Mammary epithelial cell (primary cell): ENCODE measurements at regions of chr2 and their contacts with region 1.

Region 1: DNA sequence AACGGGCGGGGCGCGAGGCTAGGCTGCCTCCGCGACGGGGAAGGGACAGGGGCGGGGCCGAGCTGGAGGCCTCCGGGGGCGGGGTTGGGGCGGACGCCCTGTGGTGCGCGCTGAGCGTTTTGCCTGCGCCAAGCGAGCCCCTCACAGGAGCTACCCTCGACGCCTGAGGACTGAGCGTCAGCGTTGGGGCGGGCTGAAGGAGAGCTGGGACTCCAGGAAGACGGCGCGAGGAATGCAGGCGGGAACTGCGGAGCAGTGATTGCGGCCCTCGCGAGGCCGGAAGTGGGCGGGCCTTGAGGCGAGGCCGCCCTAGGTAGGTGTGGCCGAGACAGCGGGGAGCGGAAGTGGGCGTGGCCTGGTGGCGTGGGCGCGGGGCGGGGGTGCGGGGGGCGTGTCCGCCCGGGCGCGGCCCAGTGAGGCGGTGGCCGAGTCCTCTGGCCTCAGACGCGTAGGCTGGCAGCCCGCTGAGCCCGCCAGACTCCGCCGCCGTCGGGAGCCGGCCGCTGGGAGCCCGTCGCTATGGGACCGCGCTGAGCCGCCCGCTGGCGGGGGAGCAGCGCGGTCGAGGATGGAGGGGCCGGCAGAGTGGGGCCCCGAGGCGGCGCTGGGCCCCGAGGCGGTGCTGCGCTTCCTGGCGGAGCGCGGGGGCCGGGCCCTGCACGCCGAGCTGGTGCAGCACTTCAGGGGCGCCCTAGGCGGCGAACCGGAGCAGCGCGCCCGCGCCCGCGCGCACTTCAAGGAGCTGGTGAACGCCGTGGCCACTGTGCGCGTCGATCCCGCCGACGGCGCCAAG is at the starts of genes SEPTIN10 and SOWAHC:
- DNase-seq: peak; percentile 99
- H3K4me3 ChIP-seq: peak within 1 kb of the TSS; percentile 75 to 99 (median 85)
- H3K27ac ChIP-seq: peak within 1 kb of the TSS; percentile 97
- H3K4me1 ChIP-seq: peaks cover 32% of the 10 kb centered on the region
- H3K27me3 ChIP-seq: no peaks in the 10 kb centered on the region
- CTCF ChIP-seq: no peak
- total RNA-seq, gene SEPTIN10: 76.4 to 133 TPM
- total RNA-seq, gene SOWAHC: 32.9 to 120 TPM

Region 2: DNA sequence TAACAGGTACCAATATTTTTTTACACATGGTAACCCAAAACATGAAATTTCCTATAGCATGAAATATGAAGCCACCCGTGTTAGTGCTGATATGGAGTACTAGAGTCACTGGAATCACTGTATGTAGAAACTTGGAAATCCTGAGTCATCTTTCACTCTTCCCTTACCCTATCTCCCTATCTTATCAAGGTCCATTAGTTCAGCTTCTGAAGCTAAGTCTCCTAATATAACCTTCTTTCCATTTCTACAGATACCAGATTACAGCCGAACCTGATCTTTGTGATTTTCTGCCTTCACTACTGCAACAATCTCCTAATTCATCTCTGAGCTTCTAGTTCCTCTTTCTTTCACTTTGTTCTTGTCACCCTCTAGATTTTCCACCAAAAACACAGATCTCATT is 59.4 kb before region 1 on chr2:
- CTCF ChIA-PET with region 1: no interaction called
- dilution Hi-C with region 1: no loop called
- in situ Hi-C with region 1: no loop called
- intact Hi-C with region 1: loop called (anchors 5 kb)
- DNase-seq: no peak
- H3K4me3 ChIP-seq: no peak overlapping the region
- H3K27ac ChIP-seq: no peak overlapping the region
- H3K4me1 ChIP-seq: peaks cover 15% of the 10 kb centered on the region
- H3K27me3 ChIP-seq: no peaks in the 10 kb centered on the region
- CTCF ChIP-seq: no peak

Region 3: DNA sequence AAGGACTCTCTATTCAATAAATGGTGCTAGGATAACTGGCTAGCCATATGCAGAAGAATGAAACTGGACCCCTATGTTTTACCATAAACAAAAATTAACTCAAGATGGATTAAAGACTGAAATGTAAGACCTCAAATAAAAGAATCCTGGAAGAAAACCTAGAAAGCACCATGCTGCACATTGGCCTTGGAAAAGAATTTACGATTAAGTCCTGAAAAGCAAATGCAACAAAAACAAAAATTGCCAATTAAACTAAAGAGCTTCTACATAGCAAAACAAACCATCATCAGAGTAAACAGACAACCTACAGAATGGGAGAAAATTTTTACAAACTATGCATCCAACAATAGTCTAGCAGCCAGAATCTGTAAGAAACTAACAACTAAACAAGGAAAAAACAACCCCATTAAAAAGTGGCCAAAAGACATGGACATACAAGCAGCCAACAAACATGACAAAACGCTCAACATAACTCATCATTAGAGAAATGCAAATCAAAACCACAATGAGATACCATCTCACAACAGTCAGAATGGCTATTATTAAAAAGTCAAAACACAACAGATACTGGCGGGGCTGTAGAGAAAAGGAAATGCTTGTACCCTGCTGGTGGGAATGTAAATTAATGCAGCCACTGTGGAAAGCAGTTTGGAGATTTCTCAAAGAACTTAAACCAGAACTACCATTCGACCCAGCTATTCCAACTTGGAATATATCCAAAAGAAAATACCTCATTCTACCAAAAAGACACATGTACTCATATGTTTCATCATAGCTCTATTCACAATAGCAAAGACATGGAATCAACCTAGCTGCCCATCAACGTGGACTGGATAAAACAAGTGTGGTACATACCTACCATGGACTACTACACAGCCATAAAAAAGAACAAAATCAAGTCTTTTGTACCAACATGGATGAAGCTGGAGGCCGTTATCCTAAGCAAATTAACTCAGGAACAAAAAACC is 30.9 kb before region 1 on chr2:
- CTCF ChIA-PET with region 1: no interaction called
- dilution Hi-C with region 1: no loop called
- in situ Hi-C with region 1: no loop called
- intact Hi-C with region 1: no loop called
- DNase-seq: peak; percentile 55
- H3K4me3 ChIP-seq: no peak overlapping the region
- H3K27ac ChIP-seq: no peak overlapping the region
- H3K4me1 ChIP-seq: no peaks in the 10 kb centered on the region
- H3K27me3 ChIP-seq: no peaks in the 10 kb centered on the region
- CTCF ChIP-seq: no peak

Region 4: DNA sequence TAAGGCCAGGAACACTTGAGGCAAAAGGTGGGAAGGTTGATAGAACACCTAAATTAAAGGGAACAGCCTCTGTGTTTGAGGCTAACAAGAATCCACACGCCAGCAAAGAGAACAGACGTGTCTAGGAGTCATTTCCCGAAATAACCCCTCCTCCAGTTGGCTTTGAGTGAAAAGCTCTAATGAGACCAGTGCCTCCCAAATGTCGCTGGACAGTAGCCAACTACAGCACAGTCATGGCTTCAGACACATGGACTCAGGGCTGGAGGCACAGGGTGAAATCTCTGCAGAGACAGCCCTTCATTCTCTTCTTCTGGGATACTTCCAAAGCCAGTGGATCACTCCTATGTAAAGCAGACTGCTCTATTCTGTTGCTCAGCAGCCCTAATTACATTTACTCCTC is 49.6 kb after region 1 on chr2:
- CTCF ChIA-PET with region 1: interaction called, 9 read pairs
- dilution Hi-C with region 1: no loop called
- in situ Hi-C with region 1: no loop called
- intact Hi-C with region 1: loop called (anchors 5 kb)
- DNase-seq: peak; percentile 90
- H3K4me3 ChIP-seq: no peak overlapping the region
- H3K27ac ChIP-seq: no peak overlapping the region
- H3K4me1 ChIP-seq: peaks cover 9% of the 10 kb centered on the region
- H3K27me3 ChIP-seq: no peaks in the 10 kb centered on the region
- CTCF ChIP-seq: no peak

Region 5: GRCh38 chr2:109715313-109715805 is 101.2 kb after region 1 on chr2:
- CTCF ChIA-PET with region 1: no interaction called
- dilution Hi-C with region 1: loop called (anchors 5 kb)
- in situ Hi-C with region 1: no loop called
- intact Hi-C with region 1: loop called (anchors 1 kb)
- DNase-seq: peak; percentile 51
- H3K4me3 ChIP-seq: no peak overlapping the region
- H3K27ac ChIP-seq: no peak overlapping the region
- H3K4me1 ChIP-seq: no peaks in the 10 kb centered on the region
- H3K27me3 ChIP-seq: no peaks in the 10 kb centered on the region
- CTCF ChIP-seq: peak; percentile 67 to 94

Region 6: GRCh38 chr2:109736177-109736827 is 122.2 kb after region 1 on chr2:
- CTCF ChIA-PET with region 1: no interaction called
- dilution Hi-C with region 1: no loop called
- in situ Hi-C with region 1: no loop called
- intact Hi-C with region 1: no loop called
- DNase-seq: peak; percentile 36
- H3K4me3 ChIP-seq: no peak overlapping the region
- H3K27ac ChIP-seq: no peak overlapping the region
- H3K4me1 ChIP-seq: no peaks in the 10 kb centered on the region
- H3K27me3 ChIP-seq: no peaks in the 10 kb centered on the region
- CTCF ChIP-seq: peak; percentile 57 to 73

Region 7: GRCh38 chr2:110748489-110748867 is 1134.4 kb after region 1 on chr2:
- CTCF ChIA-PET with region 1: interaction called, 18 read pairs
- dilution Hi-C with region 1: no loop called
- in situ Hi-C with region 1: no loop called
- intact Hi-C with region 1: no loop called
- DNase-seq: peak; percentile 73
- H3K4me3 ChIP-seq: no peak overlapping the region
- H3K27ac ChIP-seq: no peak overlapping the region
- H3K4me1 ChIP-seq: peaks cover 12% of the 10 kb centered on the region
- H3K27me3 ChIP-seq: no peaks in the 10 kb centered on the region
- CTCF ChIP-seq: no peak